ENCODE measurements at regions of chr4 and their contacts with region 1.

Region 1: DNA sequence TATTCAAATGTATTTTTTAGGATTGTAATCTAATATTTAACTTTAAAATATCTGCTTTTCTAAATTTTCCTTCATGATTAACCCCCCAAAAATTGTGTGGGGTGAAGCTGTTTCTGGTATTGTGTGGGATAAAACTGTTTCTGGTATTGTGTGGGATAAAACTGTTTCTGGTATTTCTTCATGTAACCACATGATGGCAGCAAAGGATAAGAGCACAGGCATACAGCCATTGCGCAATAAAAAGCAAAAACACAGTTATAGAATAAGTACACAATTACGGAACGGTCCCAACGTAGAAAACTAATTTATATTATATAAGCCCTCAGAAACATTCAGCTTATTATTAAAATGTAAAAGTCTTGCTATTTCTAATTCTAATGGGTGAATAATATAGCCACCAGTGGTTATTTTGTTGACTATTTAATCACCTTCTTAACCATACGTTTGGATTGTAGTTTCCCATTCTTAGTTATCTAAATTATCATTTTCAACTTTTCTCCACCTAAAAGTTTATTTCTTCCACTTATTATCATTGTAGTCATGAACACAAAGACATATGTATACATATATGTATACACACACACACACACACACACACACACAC is 333.9 kb upstream of the FSTL5 start:
- DNase-seq: peak; percentile 23
- H3K4me3 ChIP-seq: no peak overlapping the region
- CTCF ChIP-seq: peak; percentile 64

Region 2: GRCh38 chr4:162535121-162535520 is 37.5 kb after region 1 on chr4:
- in situ Hi-C with region 1: no loop called
- DNase-seq: no peak
- H3K4me3 ChIP-seq: no peak overlapping the region
- CTCF ChIP-seq: no peak

Region 3: DNA sequence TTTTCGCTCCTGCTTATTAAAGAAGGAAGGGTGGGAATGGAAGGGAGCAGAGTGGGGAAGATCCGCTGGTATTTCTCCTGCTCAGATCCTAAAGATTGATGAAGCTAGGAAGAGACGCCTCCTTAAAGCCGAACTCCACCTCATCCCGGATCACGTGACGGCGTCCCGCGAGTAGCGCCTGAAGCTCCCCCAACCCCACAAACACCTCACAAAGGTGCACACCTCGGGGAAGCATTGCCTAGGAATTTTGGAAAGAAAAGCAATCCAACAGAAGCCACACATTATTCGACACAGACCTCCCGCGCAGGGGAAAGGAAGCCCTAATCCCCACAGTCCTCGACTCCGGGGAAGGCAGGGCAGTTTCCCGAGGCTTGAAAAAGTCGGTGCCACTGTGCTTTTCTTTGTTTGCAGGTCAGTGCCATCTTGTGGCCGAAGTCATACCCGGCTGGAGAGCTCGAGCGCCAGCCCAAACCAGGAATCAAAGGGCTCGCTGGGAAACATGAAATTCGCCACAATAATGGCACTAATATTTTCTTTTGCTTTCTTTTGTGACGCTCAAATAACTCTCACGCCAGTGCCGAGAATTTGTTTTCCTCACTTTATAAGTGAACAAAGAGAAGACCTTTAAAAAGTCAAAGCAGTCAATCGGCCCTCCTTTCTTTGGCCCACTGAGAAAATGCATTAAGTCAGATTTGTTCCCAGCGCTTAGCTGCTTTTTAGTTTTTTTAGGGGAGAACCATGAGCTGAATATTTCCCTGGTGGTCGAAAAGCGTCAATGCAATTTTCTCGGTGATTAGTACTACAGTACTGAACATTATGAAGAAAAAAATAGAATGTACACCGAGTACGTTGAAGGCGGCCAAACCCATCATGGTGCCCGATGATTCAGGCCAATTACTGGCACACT is 835.1 kb after region 1 on chr4 and contains the start of gene NPY1R:
- in situ Hi-C with region 1: loop called (anchors 25 kb)
- DNase-seq: peak; percentile 66
- H3K4me3 ChIP-seq: peak within 1 kb of the TSS; percentile 52
- CTCF ChIP-seq: peak; percentile 75

Region 4: DNA sequence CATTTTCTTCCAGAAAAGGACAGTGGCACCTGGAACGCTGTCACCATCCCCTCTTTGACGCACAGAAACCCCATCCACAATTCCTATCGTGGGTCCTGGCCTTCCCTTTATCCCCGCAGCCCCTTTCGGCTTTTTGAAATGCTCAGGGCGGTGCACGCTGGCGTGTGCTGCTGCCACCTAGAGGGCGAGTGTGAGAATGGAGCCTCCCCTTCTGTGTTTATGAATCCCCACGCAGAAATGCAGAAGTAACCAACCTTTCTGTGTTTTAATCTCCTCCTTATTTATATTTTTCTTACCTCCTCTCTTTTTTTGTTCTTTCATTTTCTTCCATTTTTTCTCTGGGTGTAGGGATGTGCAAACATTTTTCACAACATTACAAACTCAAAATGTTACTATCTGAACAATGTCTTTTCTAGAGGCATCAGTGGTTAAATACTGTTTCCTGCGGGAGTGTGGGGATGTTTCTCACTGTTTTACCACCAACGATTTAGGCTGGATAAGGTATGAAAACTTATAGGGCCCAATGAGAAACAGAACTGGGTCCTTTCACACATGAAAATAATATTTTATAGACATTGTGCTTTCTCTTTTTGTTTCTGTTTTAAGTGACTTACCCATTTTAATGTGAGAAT is 1046.9 kb after region 1 on chr4:
- in situ Hi-C with region 1: loop called (anchors 25 kb)
- DNase-seq: no peak
- H3K4me3 ChIP-seq: no peak overlapping the region
- CTCF ChIP-seq: peak; percentile 98